ENCODE measurements at regions of chr10 and their contacts with region 1.

Region 1: DNA sequence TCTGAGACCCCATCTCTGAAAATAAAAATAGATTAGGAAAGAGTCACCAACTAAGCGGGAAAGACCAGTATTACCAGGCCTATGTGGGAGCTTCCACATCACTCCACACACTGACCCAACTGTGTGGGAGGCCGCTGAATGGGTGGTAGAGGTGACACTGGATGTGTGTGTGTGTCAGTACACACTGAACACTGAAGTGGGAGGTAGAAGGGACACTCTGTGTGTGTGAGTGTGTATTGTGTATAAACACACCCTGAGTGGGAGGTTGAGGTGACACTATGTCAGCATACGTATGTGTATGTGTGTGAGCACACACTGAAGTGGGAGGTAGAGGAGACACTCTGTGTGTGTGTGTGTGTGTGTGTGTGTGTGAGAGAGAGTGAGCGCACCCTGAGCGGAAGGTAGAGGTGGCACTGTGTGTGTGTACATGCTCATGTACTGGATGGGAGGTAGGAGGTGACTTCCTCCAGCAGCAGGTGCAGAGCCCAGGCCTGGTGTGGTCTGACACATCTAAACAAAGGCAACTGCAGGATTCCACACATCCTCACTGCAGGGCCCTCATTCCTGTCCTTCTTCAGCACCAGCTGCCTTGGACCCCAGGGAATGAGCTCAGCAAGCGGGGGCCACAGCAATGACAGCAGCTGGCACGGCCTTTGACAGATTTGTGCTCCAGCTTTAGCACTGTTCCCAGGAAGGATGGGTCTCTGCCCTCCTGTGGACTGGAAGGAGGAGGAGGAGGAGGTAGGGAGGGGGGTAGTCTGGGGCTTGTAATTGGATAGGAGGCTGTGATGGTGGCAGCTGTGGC is 26.5 kb upstream of the RBM20 start:
- DNase-seq: peak; percentile 54
- H3K4me3 Mint-ChIP-seq: peak overlapping the region; percentile 56
- H3K27ac Mint-ChIP-seq: peak overlapping the region; percentile 90
- H3K4me1 Mint-ChIP-seq: peaks cover 54% of the 10 kb centered on the region
- H3K27me3 Mint-ChIP-seq: no peaks in the 10 kb centered on the region

Region 2: GRCh38 chr10:110651044-110651958 is 33.7 kb after region 1 on chr10:
- intact Hi-C with region 1: loop called (anchors 2 kb)
- DNase-seq: peak; percentile 76
- H3K4me3 Mint-ChIP-seq: no peak overlapping the region
- H3K27ac Mint-ChIP-seq: no peak overlapping the region
- H3K4me1 Mint-ChIP-seq: peaks cover 15% of the 10 kb centered on the region
- H3K27me3 Mint-ChIP-seq: peaks cover 49% of the 10 kb centered on the region